GM13976 (cell line): ENCODE measurements at regions of chr11 and their contacts with region 1.

Region 1: GRCh38 chr11:88543902-88544655 is 206.5 kb upstream of the CTSC start:
- DNase-seq: peak; percentile 45
- CTCF ChIP-seq: peak; percentile 87

Region 2: GRCh38 chr11:87352759-87353707 is 1191.0 kb before region 1 on chr11:
- in situ Hi-C with region 1: loop called (anchors 25 kb)
- DNase-seq: peak; percentile 82
- CTCF ChIP-seq: peak; percentile 96

Region 3: GRCh38 chr11:88016392-88017170 is 527.5 kb before region 1 on chr11:
- in situ Hi-C with region 1: loop called (anchors 25 kb)
- DNase-seq: peak; percentile 33
- CTCF ChIP-seq: peak; percentile 71